Activated B cell treated with CpG ODN at 0.5 μM for 24 hours (primary cell): ENCODE measurements at regions of chrX and their contacts with region 1.

Region 1: DNA sequence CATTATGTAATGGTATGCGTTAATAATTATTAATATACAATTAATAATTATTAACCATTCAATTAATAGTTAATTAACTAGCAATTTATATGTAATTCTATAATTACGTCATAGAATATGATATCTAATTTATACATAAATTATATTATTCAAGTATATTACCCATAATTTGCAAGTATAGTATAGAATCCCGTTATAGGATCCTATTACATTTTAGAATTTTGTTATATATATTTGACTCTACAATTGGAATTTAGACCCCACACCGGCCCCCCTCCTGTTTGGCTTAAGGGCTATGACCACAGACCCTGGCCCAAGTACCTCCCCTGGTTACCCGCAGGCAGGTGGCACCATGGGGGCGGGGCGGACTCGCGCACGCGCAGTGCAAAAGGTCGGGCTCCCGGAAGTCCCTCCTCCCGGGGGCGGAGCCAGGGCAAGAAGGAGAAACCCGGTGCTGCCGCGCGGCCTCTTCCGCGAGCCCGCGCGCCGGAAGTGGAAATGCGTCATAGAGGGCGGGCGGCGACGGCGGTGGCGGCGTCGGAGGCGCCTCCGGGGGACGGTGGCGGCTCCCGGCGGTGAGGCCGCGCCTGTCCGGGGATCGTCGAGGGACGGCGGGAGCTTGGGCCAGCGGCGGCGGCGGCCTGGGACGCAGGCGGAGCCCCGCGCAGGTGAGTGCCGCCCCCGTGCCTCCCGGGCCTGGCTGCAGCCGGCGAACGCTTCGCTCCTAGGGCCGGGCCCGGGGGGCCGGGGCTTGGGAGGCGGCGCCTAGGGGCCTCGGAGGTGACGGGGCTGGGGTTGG is at the start of gene AKAP17A:
- DNase-seq: peak; percentile 100
- ATAC-seq: peak; percentile 84
- H3K4me3 Mint-ChIP-seq: peak within 1 kb of the TSS; percentile 91
- H3K27ac Mint-ChIP-seq: peak within 1 kb of the TSS; percentile 83
- H3K4me1 Mint-ChIP-seq: peaks cover 51% of the 10 kb centered on the region
- H3K27me3 Mint-ChIP-seq: no peaks in the 10 kb centered on the region
- CTCF ChIP-seq: no peak
- total RNA-seq, gene AKAP17A: 75.7 and 84.7 TPM in 2 replicates

Region 2: GRCh38 chrX:1246816-1247215 is 344.5 kb before region 1 on chrX:
- CTCF ChIA-PET with region 1: no interaction called
- POLR2A ChIA-PET with region 1: no interaction called
- intact Hi-C with region 1: loop called (anchors 5 kb)
- DNase-seq: peak; percentile 71
- ATAC-seq: peak; percentile 65
- H3K4me3 Mint-ChIP-seq: no peak overlapping the region
- H3K27ac Mint-ChIP-seq: no peak overlapping the region
- H3K4me1 Mint-ChIP-seq: peaks cover 22% of the 10 kb centered on the region
- H3K27me3 Mint-ChIP-seq: peaks cover 5% of the 10 kb centered on the region
- CTCF ChIP-seq: no peak

Region 3: DNA sequence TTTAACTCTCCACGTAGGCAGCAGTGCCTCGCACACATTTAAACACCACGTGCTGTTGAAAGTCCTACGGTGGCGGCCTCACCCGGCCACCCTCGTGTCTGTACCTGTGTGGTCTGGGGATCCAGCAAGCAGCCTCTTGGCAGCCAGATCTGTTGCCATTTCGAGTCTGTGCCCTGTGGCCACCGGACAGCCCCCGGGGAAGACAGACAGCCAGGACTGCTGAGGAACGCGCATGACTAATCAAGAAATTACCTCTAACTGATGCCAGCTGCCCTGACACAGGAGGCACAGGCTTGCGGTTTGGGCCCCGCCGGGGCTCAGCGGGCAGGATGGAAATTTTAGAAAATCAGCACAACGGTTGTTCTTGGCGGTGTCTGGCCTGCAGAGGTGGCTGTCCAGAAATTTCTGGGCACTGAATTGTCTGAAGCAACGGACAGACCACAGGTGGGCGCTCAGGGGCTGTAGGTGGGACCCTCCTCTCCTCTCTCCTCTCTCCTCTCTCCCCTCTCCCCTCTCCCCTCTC is 123.0 kb before region 1 on chrX:
- CTCF ChIA-PET with region 1: no interaction called
- POLR2A ChIA-PET with region 1: no interaction called
- intact Hi-C with region 1: loop called (anchors 1 kb)
- DNase-seq: peak; percentile 71
- ATAC-seq: peak; percentile 78
- H3K4me3 Mint-ChIP-seq: peak overlapping the region; percentile 73
- H3K27ac Mint-ChIP-seq: peak overlapping the region; percentile 96
- H3K4me1 Mint-ChIP-seq: peaks cover 88% of the 10 kb centered on the region
- H3K27me3 Mint-ChIP-seq: no peaks in the 10 kb centered on the region
- CTCF ChIP-seq: no peak

Region 4: DNA sequence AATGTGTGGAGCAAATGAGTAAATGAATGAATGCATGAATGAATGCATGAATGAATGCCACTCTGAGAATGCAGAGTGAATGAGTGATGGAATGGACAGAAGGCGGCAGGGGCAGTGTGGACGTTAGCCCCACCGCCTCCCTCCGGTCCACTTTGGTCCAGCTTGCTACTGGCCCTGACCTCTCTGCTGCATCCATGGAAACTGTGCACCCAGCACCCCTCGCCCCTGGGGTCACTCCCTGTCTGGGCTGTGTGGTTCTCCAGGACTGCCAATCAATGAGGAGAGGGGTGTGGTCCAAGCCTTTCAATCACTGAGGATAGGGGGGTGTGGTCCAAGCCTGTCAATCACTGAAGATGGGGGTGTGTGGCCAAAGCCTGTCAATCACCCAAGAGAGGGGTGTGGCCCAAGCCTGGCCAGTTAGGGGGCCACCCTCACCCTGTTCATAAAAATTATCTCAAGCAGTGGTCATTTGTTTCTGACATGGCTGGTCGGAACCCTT is 99.4 kb before region 1 on chrX:
- CTCF ChIA-PET with region 1: no interaction called
- POLR2A ChIA-PET with region 1: no interaction called
- intact Hi-C with region 1: loop called (anchors 2 kb)
- DNase-seq: peak; percentile 61
- ATAC-seq: peak; percentile 66
- H3K4me3 Mint-ChIP-seq: peak overlapping the region; percentile 88
- H3K27ac Mint-ChIP-seq: peak overlapping the region; percentile 88
- H3K4me1 Mint-ChIP-seq: peaks cover 69% of the 10 kb centered on the region
- H3K27me3 Mint-ChIP-seq: no peaks in the 10 kb centered on the region
- CTCF ChIP-seq: no peak

Region 5: DNA sequence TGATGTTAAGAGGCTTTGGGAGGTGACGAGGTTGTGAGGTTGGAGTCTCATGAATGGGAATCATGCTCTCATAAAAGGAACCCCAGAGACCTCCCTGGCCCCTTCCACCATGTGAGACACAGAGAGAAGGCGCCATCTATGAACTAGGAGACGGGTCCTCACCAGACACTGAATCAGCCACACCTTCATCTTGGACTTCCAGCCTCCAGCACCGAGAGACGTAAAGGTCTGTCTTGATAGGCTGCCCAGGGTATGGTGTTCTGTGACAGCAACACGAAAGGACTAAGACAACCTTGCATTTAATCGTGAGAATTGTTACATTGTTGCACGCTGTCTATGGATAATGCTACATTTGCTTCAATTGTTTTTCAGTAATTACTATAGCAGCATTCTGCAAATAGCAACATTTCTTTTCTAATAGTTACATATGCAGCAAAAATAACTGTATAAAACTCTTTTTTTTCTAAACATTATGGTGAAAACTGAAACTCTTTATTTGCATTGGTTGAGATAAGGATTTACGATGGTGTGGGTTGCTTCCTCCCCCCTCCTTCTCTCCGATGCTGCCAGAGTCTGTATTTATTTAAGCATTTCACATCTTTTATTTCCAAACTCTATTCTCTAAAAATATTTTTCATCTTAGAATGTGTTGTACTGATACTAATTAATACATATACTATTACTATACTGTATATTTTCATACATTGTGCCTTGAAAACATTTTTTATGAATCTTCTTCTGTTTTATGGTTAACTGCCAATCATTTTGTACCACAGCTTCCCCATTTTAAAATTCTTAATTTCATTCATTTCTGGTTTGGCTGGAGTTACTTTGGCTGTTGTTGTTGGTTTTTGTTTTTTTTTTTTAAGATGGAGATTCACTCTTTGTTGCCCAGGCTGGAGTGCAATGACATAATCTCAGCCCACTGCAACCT is 26.3 kb before region 1 on chrX:
- CTCF ChIA-PET with region 1: no interaction called
- POLR2A ChIA-PET with region 1: no interaction called
- intact Hi-C with region 1: no loop called
- DNase-seq: no peak
- ATAC-seq: peak; percentile 49
- H3K4me3 Mint-ChIP-seq: no peak overlapping the region
- H3K27ac Mint-ChIP-seq: no peak overlapping the region
- H3K4me1 Mint-ChIP-seq: peaks cover 39% of the 10 kb centered on the region
- H3K27me3 Mint-ChIP-seq: peaks cover 3% of the 10 kb centered on the region
- CTCF ChIP-seq: no peak

Region 6: GRCh38 chrX:1657367-1658070 is 66.2 kb after region 1 on chrX:
- CTCF ChIA-PET with region 1: no interaction called
- POLR2A ChIA-PET with region 1: no interaction called
- intact Hi-C with region 1: loop called (anchors 1 kb)
- DNase-seq: peak; percentile 18
- ATAC-seq: no peak
- H3K4me3 Mint-ChIP-seq: peak overlapping the region; percentile 80
- H3K27ac Mint-ChIP-seq: peak overlapping the region; percentile 81
- H3K4me1 Mint-ChIP-seq: peaks cover 27% of the 10 kb centered on the region
- H3K27me3 Mint-ChIP-seq: no peaks in the 10 kb centered on the region
- CTCF ChIP-seq: no peak

Region 7: GRCh38 chrX:1700757-1701156 is 109.5 kb after region 1 on chrX:
- CTCF ChIA-PET with region 1: no interaction called
- POLR2A ChIA-PET with region 1: no interaction called
- intact Hi-C with region 1: no loop called
- DNase-seq: no peak
- ATAC-seq: no peak
- H3K4me3 Mint-ChIP-seq: no peak overlapping the region
- H3K27ac Mint-ChIP-seq: no peak overlapping the region
- H3K4me1 Mint-ChIP-seq: no peaks in the 10 kb centered on the region
- H3K27me3 Mint-ChIP-seq: no peaks in the 10 kb centered on the region
- CTCF ChIP-seq: no peak

Region 8: GRCh38 chrX:2696698-2697215 is 1105.5 kb after region 1 on chrX:
- CTCF ChIA-PET with region 1: no interaction called
- POLR2A ChIA-PET with region 1: no interaction called
- intact Hi-C with region 1: loop called (anchors 2 kb)
- DNase-seq: no peak
- ATAC-seq: peak; percentile 83
- H3K4me3 Mint-ChIP-seq: peak overlapping the region; percentile 61
- H3K27ac Mint-ChIP-seq: peak overlapping the region; percentile 83
- H3K4me1 Mint-ChIP-seq: peaks cover 98% of the 10 kb centered on the region
- H3K27me3 Mint-ChIP-seq: no peaks in the 10 kb centered on the region
- CTCF ChIP-seq: no peak